ENCODE measurements at regions of chr18 and their contacts with region 1.

Region 1: DNA sequence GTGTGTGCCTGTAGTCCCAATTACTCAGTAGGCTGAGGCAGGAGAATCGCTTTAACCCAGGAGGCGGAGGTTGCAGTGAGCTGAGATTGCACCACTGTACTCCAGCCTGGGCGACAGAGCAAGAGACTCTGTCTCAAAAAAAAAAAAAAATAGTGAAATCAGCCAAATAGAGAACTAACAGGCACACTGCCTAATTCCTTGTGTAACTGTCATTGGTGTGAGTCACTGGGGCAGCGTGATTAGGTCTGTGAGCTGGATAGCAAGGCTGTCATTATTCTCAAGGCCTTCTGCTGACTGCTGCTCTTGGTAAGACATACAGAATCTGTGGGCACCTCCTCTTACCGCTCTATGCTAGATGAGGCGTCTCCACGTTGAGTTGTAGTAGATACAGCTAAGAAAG is 270.3 kb downstream of the NEDD4L start:
- DNase-seq: peak; percentile 65
- ATAC-seq: peak; percentile 39; the same call in 2 of the 3 replicates
- H3K4me3 ChIP-seq: no peak overlapping the region
- H3K27ac ChIP-seq: peak overlapping the region; percentile 78
- H3K4me1 ChIP-seq: peaks cover 83% of the 10 kb centered on the region
- H3K27me3 ChIP-seq: no peaks in the 10 kb centered on the region; a peak in 1 of 5 replicates
- CTCF ChIP-seq: no peak
- EP300 ChIP-seq: no peak
- POLR2A ChIP-seq: no peak
- RAD21 ChIP-seq: no peak

Region 2: DNA sequence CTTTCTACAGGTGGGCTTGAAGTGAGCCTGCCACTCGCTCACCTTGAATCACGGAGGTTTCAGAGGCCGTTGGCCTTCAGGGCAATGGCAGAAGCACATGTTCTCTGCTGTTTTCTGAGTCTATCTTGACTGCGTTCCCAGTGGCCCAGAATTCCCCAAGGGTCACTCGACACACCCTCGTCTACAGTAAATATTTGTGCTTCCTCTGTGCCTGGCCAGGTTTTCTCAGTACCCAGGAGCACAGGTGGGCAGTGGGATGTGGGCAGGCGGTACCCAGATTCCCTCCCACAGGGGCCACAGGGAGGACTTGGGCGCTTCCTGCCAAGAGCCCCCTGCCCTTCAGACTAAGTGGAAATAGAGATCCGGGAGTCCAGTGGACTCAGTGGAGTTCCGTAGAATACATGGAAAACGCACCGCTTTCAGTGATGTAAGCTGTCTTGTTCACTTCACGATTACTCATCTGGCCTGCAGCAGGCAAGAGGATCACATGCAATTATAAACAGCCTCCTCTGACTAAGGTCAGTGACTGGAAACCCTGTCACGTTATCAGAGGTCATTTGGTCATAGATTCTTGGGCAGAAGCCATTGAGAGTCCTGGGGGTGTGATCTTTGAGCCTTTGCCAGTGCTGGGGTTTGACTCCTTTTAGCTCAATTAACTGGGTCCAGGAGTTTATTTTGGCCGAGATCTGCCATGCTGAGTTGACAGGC is 90.4 kb before region 1 on chr18:
- CTCF ChIA-PET with region 1: no interaction called
- POLR2A ChIA-PET with region 1: interaction called, 8 read pairs
- in situ Hi-C with region 1: no loop called
- intact Hi-C with region 1: loop called (anchors 2 kb)
- DNase-seq: peak; percentile 81
- ATAC-seq: peak; percentile 81
- H3K4me3 ChIP-seq: peak overlapping the region; percentile 56 to 96 (median 75)
- H3K27ac ChIP-seq: peak overlapping the region; percentile 67
- H3K4me1 ChIP-seq: peaks cover 59% of the 10 kb centered on the region
- H3K27me3 ChIP-seq: no peaks in the 10 kb centered on the region
- CTCF ChIP-seq: no peak
- EP300 ChIP-seq: no peak
- POLR2A ChIP-seq: peak in 1 of 2 experiments; percentile 27; a peak in 1 of 4 replicates
- RAD21 ChIP-seq: no peak

Region 3: GRCh38 chr18:58288922-58289797 is 25.1 kb before region 1 on chr18:
- CTCF ChIA-PET with region 1: no interaction called
- POLR2A ChIA-PET with region 1: interaction called, 13 read pairs
- in situ Hi-C with region 1: no loop called
- intact Hi-C with region 1: loop called (anchors 2 kb)
- DNase-seq: no peak
- ATAC-seq: no peak
- H3K4me3 ChIP-seq: no peak overlapping the region
- H3K27ac ChIP-seq: peak overlapping the region; percentile 97
- H3K4me1 ChIP-seq: peaks cover 55% of the 10 kb centered on the region
- H3K27me3 ChIP-seq: no peaks in the 10 kb centered on the region
- CTCF ChIP-seq: no peak
- EP300 ChIP-seq: no peak
- POLR2A ChIP-seq: no peak
- RAD21 ChIP-seq: no peak